SK-N-SH (cell line): ENCODE measurements at regions of chr11 and their contacts with region 1.

Region 1: DNA sequence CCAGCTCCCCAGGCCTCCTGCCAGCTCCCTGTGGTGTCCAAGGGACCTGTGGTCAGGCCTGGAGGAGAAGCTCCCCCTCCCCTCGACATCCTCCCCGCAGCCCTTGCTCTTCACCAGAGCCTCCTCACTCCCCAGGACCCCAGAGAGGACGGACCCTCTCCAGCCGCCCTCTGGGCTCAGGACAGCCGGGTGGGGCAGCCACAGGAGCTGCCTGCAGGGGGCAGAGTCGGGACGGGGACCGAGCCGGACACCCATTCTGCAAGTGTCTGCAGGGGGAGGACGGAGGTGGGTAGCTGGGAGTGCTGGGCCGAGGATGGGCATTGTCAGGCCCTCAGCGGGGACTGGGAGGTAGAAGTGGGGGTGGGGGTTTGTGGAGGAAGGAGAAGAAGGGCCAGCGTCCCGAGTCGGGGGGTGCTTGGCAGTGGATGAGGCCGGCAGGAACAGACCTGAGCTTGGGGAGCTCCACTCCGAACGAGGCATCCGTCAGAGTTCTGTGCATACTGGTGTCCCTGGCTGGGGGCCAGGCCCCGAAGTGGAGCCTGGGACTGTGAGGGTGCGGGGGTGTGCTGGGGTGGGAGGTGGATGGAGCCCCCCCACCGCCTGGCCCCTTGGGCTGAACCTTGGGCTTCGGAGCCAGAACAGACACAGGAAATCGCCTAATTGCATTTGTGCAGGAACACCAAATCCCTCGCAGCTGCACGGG is 15.2 kb downstream of the PRR33 start:
- DNase-seq: peak; percentile 86
- H3K4me3 ChIP-seq: no peak overlapping the region; a peak in 1 of 4 replicates
- H3K27ac ChIP-seq: peak overlapping the region; percentile 28 to 78; a peak in 2 of 4 replicates
- H3K4me1 ChIP-seq: peaks cover 0 to 46% of the 10 kb centered on the region in 2 experiments; a peak in 2 of 4 replicates
- H3K27me3 ChIP-seq: no peaks in the 10 kb centered on the region
- CTCF ChIP-seq: peak; percentile 51
- EP300 ChIP-seq: no peak; a peak in 1 of 4 replicates
- RAD21 ChIP-seq: no peak

Region 2: DNA sequence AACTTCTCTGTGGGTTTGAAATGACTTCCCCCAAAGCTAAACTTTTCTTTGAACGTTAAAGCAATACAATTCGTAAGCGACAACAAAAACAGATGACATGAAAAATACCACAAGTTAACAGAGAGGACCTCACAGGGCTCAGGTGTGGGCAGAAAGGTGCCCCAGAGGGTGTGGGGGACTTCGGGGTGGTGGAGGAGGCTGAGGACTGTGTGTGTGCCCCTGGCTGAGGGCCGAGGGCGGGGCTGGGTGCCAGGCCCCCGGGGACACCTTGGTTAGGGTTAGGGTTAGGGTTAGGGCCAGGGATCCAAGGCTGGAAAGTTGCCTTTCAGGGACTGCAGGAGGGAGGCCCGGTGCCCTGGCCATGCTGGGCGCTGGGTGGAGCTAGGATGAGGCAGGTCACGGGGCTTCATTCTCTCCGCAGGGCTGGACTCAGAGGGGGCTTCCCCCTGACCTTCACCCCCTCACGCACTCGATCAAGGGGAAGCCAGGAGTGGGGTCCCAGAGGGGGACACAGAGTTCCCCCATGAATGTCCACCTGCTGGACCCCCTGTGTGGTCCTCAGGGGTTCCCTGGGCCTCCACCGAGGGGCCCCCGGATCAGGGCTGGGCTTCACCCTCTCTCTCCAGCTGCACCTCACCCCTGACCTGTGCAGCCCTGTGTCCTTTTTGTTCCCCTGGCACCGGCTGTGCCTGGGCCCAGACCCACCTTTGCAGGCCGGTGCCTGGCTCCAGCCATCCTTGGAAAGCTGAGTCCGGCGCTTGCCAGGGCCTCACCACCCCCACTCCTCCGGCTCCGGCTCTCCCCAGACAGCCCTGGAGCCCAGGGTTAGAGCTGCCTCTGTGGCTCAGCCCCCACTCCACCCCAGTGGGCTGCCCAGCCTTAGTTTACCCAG is 30.7 kb before region 1 on chr11:
- CTCF ChIA-PET with region 1: interaction called, 22 read pairs
- POLR2A ChIA-PET with region 1: interaction called, 6 read pairs
- DNase-seq: no peak
- H3K4me3 ChIP-seq: no peak overlapping the region
- H3K27ac ChIP-seq: no peak overlapping the region
- H3K4me1 ChIP-seq: peaks cover 0 to 2% of the 10 kb centered on the region in 2 experiments; a peak in 1 of 4 replicates
- H3K27me3 ChIP-seq: no peaks in the 10 kb centered on the region
- CTCF ChIP-seq: no peak
- EP300 ChIP-seq: no peak
- RAD21 ChIP-seq: no peak

Region 3: GRCh38 chr11:1852877-1853276 is 23.6 kb before region 1 on chr11 and contains the start of gene LSP1:
- CTCF ChIA-PET with region 1: interaction called, 22 read pairs
- POLR2A ChIA-PET with region 1: interaction called, 6 read pairs
- DNase-seq: no peak
- H3K4me3 ChIP-seq: no peak within 1 kb of the TSS
- H3K27ac ChIP-seq: no peak within 1 kb of the TSS
- H3K4me1 ChIP-seq: no peaks in the 10 kb centered on the region; a peak in 1 of 4 replicates
- H3K27me3 ChIP-seq: no peaks in the 10 kb centered on the region
- CTCF ChIP-seq: no peak
- EP300 ChIP-seq: no peak
- RAD21 ChIP-seq: no peak
- polyA plus RNA-seq, gene LSP1: 0.34 and 0.38 TPM in 2 replicates